Gastrocnemius medialis (tissue), 4 donors: ENCODE measurements at regions of chr9 and their contacts with region 1.

Region 1: GRCh38 chr9:70229579-70229978 is 29.2 kb upstream of the SMC5 start:
- DNase-seq: no peak
- ATAC-seq: no peak
- H3K4me3 ChIP-seq: no peak overlapping the region
- H3K27ac ChIP-seq: peak overlapping the region in 1 of 4 donors; percentile 39
- H3K4me1 ChIP-seq: peaks cover 16 to 17% of the 10 kb centered on the region in 2 donors
- H3K27me3 ChIP-seq: no peaks in the 10 kb centered on the region
- CTCF ChIP-seq: peak in 3 of 5 experiments; percentile 25 to 28 (median 28)
- POLR2A ChIP-seq: no peak

Region 2: DNA sequence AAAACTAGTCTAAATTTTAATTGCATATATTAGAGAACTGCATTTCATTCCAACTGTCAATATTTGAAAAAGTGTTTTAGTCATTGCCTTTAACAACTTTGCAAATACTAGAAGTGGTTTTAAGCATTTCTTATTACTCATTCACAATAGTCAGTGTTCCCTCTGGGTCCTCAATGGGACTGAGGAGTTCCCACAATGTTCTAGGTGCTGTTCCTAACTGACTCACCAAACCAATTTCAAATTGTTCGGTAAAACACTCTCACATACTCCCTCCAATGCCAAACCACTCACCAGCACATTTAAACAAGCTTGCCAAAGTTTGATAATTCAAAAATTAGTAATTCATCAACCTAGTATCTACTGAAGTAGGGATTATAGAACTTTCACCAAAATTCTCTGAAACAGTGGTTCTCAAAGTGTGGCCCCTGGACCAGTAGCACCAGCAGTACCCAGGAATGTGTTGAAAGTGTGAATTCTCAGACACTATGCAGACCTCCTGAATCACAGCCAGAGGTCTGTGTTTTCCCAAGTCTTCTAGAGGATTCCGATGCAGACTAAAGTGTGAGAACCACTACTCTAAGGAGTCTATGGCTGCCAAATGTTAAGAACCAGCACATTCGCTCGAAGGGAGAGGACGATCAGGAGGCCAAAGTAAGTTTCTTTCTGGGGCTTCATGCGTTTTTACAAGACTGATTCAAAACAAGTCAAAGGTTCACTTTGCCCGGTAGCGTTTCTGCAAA is 630.2 kb before region 1 on chr9:
- in situ Hi-C with region 1: no loop called
- intact Hi-C with region 1: no loop called
- DNase-seq: no peak
- ATAC-seq: no peak
- H3K4me3 ChIP-seq: no peak overlapping the region
- H3K27ac ChIP-seq: no peak overlapping the region
- H3K4me1 ChIP-seq: peaks cover 0 to 11% of the 10 kb centered on the region in 2 donors
- H3K27me3 ChIP-seq: no peaks in the 10 kb centered on the region
- CTCF ChIP-seq: no peak
- POLR2A ChIP-seq: no peak

Region 3: DNA sequence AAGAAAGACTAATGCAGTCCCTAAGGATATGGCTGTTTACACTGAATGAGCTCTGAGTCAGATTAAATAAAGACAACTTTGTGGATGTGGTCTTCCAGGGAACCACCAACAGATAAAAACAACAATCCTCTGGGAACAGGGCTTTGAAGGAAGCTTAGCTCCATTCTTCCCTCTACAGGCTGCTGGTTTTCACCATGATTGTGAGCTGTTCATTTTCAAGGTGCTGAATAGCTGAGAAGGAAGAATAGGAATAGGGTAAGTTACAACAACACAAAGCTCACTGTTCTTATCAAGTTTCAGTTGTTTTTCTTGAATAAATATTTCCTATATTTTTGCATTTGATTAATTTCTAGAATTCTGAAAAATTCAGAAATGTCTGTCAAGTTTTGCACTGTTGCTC is 443.8 kb before region 1 on chr9:
- in situ Hi-C with region 1: loop called in 1 of 4 experiments (anchors 25 kb)
- intact Hi-C with region 1: no loop called
- DNase-seq: no peak
- ATAC-seq: no peak
- H3K4me3 ChIP-seq: no peak overlapping the region
- H3K27ac ChIP-seq: no peak overlapping the region
- H3K4me1 ChIP-seq: no peaks in the 10 kb centered on the region
- H3K27me3 ChIP-seq: no peaks in the 10 kb centered on the region
- CTCF ChIP-seq: no peak
- POLR2A ChIP-seq: no peak

Region 4: GRCh38 chr9:70111042-70111602 is 118.5 kb before region 1 on chr9:
- in situ Hi-C with region 1: loop called in 1 of 4 experiments (anchors 25 kb)
- intact Hi-C with region 1: no loop called
- DNase-seq: peak; percentile 57 to 68
- ATAC-seq: peak; percentile 74 to 90
- H3K4me3 ChIP-seq: no peak overlapping the region
- H3K27ac ChIP-seq: peak overlapping the region in 1 of 4 donors; percentile 0
- H3K4me1 ChIP-seq: peaks cover 0 to 10% of the 10 kb centered on the region in 2 donors
- H3K27me3 ChIP-seq: no peaks in the 10 kb centered on the region
- CTCF ChIP-seq: peak; percentile 52 to 82 (median 78)
- POLR2A ChIP-seq: no peak

Region 5: GRCh38 chr9:70772601-70773000 is 543.0 kb after region 1 on chr9:
- in situ Hi-C with region 1: no loop called
- intact Hi-C with region 1: no loop called
- DNase-seq: no peak
- ATAC-seq: no peak
- H3K4me3 ChIP-seq: no peak overlapping the region
- H3K27ac ChIP-seq: no peak overlapping the region
- H3K4me1 ChIP-seq: no peaks in the 10 kb centered on the region
- H3K27me3 ChIP-seq: no peaks in the 10 kb centered on the region
- CTCF ChIP-seq: no peak
- POLR2A ChIP-seq: no peak